AG04450 (cell line): ENCODE measurements at regions of chr19 and their contacts with region 1.

Region 1: DNA sequence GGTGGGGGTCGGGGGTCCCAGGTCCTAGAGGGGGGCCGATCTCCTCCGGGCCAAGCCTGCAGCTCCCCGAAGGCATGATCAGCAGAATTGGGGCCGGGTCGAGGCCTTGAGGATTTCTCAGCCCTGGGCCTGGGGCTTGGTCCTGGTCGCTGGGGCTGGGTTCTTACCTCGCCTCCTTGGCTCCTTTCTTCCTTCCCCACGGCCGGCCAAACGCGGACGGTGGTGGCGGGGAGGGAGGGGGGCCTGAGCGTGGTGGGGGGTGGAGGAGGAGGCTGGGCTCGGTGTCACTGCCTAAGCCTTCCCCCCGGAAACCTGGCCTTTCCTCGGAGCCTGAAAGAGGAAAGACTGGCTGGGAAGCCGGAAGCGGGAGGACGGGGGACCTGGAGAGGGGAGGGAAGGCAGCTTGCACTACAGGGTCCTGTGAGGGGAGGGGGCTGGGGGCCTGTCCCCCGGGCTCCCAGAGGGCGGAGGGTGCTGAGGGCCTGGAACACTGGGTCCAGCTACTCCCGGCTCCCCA is at the start of gene ZNF579:
- DNase-seq: peak; percentile 78
- H3K4me3 ChIP-seq: peak within 1 kb of the TSS; percentile 96
- H3K27ac ChIP-seq: peak within 1 kb of the TSS; percentile 73
- H3K27me3 ChIP-seq: no peaks in the 10 kb centered on the region
- CTCF ChIP-seq: no peak
- polyA plus RNA-seq, gene ZNF579: 4.2 and 5.1 TPM in 2 replicates

Region 2: GRCh38 chr19:55516878-55517620 is 63.6 kb before region 1 on chr19:
- CTCF ChIA-PET with region 1: interaction called, 12 read pairs
- POLR2A ChIA-PET with region 1: interaction called, 7 read pairs
- DNase-seq: peak; percentile 86
- H3K4me3 ChIP-seq: peak overlapping the region; percentile 44
- H3K27ac ChIP-seq: no peak overlapping the region
- H3K27me3 ChIP-seq: no peaks in the 10 kb centered on the region
- CTCF ChIP-seq: peak; percentile 90

Region 3: DNA sequence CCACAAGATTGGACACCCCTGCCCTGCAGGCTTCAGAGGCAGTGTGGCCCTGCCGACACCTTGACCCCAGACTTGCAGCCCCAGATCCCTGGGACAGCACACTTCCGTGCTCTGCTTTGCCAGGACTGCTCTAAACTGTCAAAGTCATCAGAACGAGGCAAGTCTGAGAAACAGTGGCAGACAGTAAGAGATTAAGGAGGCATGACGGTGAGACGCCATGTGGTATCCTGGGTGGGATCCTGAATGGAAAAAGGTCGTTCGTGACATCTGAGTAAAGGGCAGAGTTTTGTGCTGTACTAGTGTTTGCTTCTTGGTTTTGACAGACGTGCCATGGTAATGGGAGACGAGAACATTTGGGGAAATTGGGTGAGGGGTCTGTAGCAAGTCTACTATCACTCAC is 13.9 kb before region 1 on chr19:
- CTCF ChIA-PET with region 1: no interaction called
- POLR2A ChIA-PET with region 1: no interaction called
- DNase-seq: no peak
- H3K4me3 ChIP-seq: no peak overlapping the region
- H3K27ac ChIP-seq: no peak overlapping the region
- H3K27me3 ChIP-seq: peaks cover 16% of the 10 kb centered on the region
- CTCF ChIP-seq: no peak

Region 4: DNA sequence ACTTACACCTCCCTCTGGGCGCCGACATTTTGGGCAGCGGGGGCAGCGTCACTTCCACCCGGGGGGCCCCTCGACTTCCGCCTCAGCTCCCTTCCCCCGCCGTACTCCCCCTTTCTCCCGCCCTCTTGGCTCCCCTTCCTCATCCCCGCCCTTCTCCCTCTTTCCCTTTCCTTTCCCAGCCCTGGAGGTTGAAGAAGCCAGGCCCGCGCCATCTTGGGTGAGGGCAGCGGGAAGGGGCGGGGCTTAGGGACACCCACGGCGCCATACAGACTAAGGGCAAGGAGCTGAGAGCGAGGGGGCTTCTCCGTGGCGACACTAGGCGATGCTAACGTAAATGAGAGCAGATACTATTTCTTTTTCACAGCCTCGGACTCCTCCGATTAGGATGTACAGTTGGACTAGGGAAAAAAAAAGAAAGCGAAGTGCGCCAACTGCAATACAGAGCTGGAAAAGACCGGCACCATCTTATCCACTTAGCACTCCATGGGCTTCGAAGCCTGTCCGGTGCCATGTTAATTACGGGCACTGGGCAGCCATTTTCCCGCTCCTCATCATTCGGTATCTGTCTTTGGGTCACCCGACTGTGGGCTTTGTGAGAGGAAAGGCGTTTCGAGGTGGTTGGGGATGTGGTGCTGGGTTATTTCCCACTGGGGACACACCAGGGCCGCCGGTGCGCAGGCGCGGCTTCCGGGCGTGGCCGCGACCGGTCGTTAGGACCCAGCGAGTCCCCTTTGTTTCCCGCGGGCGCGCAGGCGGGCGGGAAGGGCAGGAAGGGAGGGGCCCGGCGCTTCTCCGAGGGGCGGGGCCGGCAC is 19.0 kb after region 1 on chr19 and contains the start of gene FIZ1:
- CTCF ChIA-PET with region 1: interaction called, 3 read pairs
- POLR2A ChIA-PET with region 1: interaction called, 10 read pairs
- DNase-seq: peak; percentile 98
- H3K4me3 ChIP-seq: peak within 1 kb of the TSS; percentile 87
- H3K27ac ChIP-seq: peak within 1 kb of the TSS; percentile 94
- H3K27me3 ChIP-seq: no peaks in the 10 kb centered on the region
- CTCF ChIP-seq: no peak
- polyA plus RNA-seq, gene FIZ1: 3.7 and 4.5 TPM in 2 replicates